Heart right ventricle (tissue), 16 donors: ENCODE measurements at regions of chr3 and their contacts with region 1.

Region 1: GRCh38 chr3:197906023-197906849 is 43.8 kb upstream of the RPL35A start:
- DNase-seq: peak; percentile 85 to 89
- ATAC-seq: peak; percentile 90 to 99 (median 97)
- H3K4me3 ChIP-seq: peak overlapping the region in 1 of 10 donors; percentile 20
- H3K27ac ChIP-seq: no peak overlapping the region
- H3K4me1 ChIP-seq: peaks cover 0 to 12% (median 0%) of the 10 kb centered on the region in 9 donors
- H3K27me3 ChIP-seq: no peaks in the 10 kb centered on the region
- CTCF ChIP-seq: peak; percentile 77 to 96 (median 93)

Region 2: DNA sequence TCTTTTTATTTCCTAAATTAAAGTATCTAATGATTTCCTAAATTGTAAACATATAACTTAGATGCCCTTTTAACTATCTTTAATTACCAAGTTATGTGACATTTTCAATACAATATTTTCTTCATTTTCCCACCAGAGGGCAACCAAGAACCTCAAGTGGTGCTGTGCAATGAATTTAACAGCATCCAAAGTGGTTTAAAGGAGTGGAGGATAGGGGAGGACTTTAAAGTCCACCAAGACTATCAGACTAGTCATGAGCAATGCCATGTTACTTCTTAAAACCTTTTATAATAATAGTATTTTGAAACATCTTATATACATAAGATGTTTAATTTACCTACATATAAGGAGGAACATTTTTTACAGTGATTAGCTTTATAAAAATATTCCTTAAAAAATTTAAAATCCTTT is 682.2 kb before region 1 on chr3:
- intact Hi-C with region 1: no loop called
- DNase-seq: no peak
- ATAC-seq: peak in 3 of 8 donors; percentile 48 to 63 (median 61)
- H3K4me3 ChIP-seq: no peak overlapping the region
- H3K27ac ChIP-seq: no peak overlapping the region
- H3K4me1 ChIP-seq: peaks cover 0 to 59% (median 34%) of the 10 kb centered on the region in 9 donors
- H3K27me3 ChIP-seq: no peaks in the 10 kb centered on the region
- CTCF ChIP-seq: peak; percentile 7 to 69 (median 60)

Region 3: DNA sequence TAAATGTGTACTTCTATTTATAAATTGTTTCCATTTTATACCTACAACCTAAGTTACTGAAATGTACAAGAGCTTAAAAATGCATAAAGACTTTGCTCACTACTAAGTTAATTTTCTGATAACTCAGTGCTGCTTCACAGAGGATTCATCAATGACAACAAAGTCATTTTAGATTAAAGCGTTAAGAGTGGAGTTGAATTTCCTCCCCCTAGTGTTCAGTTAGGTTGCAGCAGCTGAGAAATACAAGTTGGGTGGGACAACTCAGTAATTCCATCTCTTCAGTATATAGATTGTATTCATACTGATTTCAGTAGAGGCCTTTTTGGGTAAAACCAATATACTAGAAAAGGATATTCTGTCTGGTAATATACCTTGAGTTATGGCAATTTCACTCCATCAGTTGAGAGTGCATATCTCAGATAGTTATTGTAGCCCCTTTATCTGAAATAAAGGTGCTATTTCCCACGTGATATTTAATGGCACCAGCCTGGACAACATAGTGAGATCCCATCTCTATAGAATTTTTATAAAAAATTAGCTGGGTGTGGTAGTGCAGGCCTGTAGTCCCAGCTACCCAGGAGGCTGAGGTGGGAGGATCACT is 36.8 kb after region 1 on chr3:
- intact Hi-C with region 1: loop called in 8 of 10 experiments (anchors 2 to 5 kb)
- DNase-seq: no peak
- ATAC-seq: peak in 2 of 8 donors; percentile 41
- H3K4me3 ChIP-seq: no peak overlapping the region
- H3K27ac ChIP-seq: no peak overlapping the region
- H3K4me1 ChIP-seq: no peaks in the 10 kb centered on the region
- H3K27me3 ChIP-seq: no peaks in the 10 kb centered on the region
- CTCF ChIP-seq: peak; percentile 31 to 82 (median 75)

Region 4: DNA sequence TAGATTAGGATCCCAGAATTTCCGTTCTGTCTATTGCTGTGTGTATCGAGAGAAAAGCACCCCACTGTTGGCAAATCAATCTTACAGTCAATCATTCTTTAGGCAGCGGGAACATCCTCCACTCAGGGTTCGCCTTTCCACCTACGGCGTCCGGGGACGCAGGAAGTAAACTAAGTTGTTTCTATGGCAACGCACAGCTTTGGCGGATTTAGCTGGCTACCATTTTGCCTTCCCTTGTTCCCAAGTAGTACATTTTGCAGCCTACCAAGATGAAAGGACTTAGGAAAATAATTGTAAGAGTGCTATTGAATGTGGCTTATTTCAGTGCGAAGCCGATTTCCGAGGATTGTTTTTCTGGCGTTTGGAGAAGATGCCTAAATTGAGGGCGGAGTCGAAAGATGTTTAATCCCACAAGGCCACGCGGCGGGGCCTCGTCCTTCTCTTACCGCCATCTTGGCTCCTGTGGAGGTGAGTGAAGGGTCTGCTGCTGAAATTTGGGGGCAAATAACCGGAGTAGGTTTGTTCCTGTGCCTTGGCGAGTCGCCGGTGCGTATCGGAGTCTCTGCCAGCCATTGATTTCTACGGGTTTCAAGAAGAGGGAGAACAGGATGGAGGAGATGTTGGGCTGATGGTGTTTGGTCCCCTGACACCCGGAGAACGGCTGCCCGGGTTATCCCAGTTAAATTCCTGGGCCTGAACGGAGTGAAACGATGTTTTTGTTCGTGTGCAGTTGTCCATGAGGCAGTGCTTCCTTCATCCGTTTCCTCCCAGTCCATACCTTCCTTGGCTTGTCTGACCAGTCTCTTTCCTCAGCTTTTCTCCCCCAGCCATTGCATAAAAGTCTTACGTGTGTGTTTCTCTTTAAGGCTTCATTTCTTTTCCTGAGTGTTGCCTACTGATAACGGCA is 43.8 kb after region 1 on chr3 and contains the start of gene RPL35A:
- intact Hi-C with region 1: loop called in 1 of 10 experiments (anchors 5 kb)
- DNase-seq: peak; percentile 82 to 90
- ATAC-seq: peak; percentile 84 to 95 (median 92)
- H3K4me3 ChIP-seq: peak within 1 kb of the TSS; percentile 45 to 84 (median 69)
- H3K27ac ChIP-seq: peak within 1 kb of the TSS; percentile 76 to 94 (median 86)
- H3K4me1 ChIP-seq: peaks cover 12 to 50% (median 45%) of the 10 kb centered on the region in 9 donors
- H3K27me3 ChIP-seq: no peaks in the 10 kb centered on the region
- CTCF ChIP-seq: no peak
- total RNA-seq, gene RPL35A: 674 to 856 (median 795) TPM